ENCODE measurements at regions of chr3 and their contacts with region 1.

Region 1: DNA sequence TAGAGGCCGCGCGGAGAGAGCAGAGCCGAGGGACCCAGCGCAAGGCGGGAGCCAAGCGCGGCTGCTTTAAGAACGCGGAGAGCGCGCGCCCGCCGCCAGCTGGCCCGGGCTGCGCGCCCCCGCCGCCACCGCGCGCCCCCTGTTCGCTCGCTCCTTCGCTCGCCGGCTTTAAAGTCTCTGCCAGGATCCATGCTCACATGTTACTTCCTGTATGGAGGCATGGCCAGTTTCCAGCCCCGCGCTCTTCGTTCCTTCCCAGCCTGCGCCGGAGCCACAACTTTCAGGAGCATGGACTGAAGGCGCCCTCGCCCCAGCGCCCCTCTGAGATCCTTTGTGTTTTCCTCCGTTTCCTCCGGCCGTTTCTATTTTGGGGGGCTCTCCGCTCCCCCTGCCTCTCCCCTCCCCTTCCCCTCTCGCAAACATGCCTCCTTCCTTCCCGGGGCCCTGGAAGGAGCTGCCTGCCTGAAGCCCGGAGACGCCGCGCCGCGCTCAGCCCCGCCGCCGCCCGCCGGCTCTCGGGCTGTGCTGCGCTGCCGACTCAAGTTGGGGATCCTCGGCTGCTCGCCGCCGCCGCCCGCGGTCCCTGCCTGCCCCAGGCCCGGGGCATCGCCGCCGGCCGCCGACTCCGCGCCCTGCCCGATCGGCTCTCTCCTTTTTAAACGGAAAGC is at the start of gene PTPRG:
- DNase-seq: peak; percentile 41 to 83 (median 78)
- H3K4me3 ChIP-seq: peak within 1 kb of the TSS; percentile 55 to 88 (median 74)
- H3K27ac ChIP-seq: peak within 1 kb of the TSS in 58 of 59 donors; percentile 58 to 96 (median 91)
- H3K27me3 ChIP-seq: peaks cover 0 to 23% (median 0%) of the 10 kb centered on the region in 45 donors
- CTCF ChIP-seq: peak in 6 of 56 donors; percentile 4 to 17 (median 9)
- total RNA-seq, gene PTPRG: 29.5 to 75.2 (median 50.6) TPM

Region 2: GRCh38 chr3:61725851-61726333 is 164.4 kb after region 1 on chr3:
- intact Hi-C with region 1: no loop called
- DNase-seq: no peak
- H3K4me3 ChIP-seq: no peak overlapping the region
- H3K27ac ChIP-seq: no peak overlapping the region
- H3K27me3 ChIP-seq: no peaks in the 10 kb centered on the region
- CTCF ChIP-seq: no peak

Region 3: GRCh38 chr3:61847784-61848462 is 286.4 kb after region 1 on chr3:
- intact Hi-C with region 1: loop called (anchors 5 to 10 kb)
- DNase-seq: peak in 4 of 10 donors; percentile 3 to 59 (median 51)
- H3K4me3 ChIP-seq: peak overlapping the region in 6 of 59 donors; percentile 1 to 27 (median 4)
- H3K27ac ChIP-seq: peak overlapping the region in 57 of 59 donors; percentile 12 to 89 (median 73)
- H3K27me3 ChIP-seq: no peaks in the 10 kb centered on the region
- CTCF ChIP-seq: no peak

Region 4: DNA sequence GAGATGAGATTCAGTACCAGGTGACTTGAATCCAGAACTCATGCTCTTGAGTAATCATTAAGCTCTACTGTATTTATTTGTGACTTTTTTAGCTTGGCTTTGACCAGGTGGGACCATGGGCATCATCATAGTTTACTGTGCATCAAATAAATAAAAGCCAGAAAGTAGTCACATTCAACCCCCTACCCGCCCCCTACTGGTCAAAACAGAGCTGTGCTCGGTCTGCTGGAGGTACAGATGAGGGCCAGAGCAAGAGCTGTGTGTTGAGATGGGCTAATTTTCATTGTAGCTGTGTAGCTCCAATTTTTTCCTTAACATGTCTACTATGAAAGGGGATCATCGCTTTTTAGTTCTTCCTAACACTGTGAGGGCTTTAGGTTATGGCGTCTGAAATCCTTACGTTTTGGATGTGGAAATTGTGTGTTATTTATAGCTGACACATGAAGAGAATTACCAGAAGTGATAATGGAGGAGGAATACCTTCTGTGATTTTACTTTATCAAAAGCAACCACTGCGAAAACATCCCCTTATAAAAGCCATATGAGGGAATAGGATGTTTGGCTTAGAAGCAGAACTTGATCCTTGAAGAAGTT is 374.9 kb after region 1 on chr3:
- intact Hi-C with region 1: loop called in 1 of 2 experiments (anchors 10 kb)
- DNase-seq: no peak
- H3K4me3 ChIP-seq: no peak overlapping the region
- H3K27ac ChIP-seq: peak overlapping the region in 4 of 59 donors; percentile 11 to 49 (median 15)
- H3K27me3 ChIP-seq: no peaks in the 10 kb centered on the region
- CTCF ChIP-seq: peak in 33 of 56 donors; percentile 5 to 46 (median 22)

Region 5: DNA sequence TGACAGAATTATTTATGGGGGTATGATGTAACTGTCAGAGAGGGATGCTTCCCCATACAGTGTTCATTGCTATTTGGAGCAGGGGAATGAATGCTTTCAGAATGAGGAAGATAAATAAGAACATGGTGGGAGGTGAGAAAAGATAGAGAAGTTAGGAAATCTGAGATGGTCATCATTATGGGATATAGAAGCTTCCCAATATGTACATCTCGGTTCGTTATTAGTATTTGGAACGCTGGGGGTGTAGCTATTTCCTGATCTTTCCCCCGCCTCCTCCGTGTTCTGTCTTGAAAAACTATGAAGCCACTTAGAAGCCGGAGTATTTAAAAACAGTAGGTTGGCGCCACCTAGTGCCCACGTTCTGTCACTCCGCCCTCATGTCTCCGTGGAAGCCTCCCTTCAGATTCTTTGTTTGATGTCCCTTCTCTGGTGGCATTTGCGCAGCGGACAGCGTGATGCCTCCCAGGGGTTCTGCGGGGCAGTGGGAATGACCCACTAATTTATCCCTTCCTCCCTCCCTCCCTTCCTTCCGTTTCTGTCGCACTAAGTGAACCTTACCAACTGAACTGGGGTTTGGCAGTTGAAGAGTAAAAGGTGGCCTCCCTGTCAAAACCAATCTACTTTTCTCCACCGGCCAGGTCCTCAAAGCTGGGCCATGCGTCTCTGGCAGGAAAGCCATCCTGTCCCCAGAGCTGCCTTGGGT is 627.3 kb after region 1 on chr3:
- intact Hi-C with region 1: loop called (anchors 2 to 5 kb)
- DNase-seq: peak; percentile 61 to 88 (median 77)
- H3K4me3 ChIP-seq: peak overlapping the region in 23 of 59 donors; percentile 2 to 43 (median 20)
- H3K27ac ChIP-seq: peak overlapping the region in 19 of 59 donors; percentile 1 to 65 (median 33)
- H3K27me3 ChIP-seq: no peaks in the 10 kb centered on the region
- CTCF ChIP-seq: peak; percentile 64 to 92 (median 86)